Colonic mucosa (tissue), 4 donors: ENCODE measurements at regions of chr22 and their contacts with region 1.

Region 1: GRCh38 chr22:45163451-45164269 is at the start of gene NUP50:
- DNase-seq: peak; percentile 95
- H3K4me3 ChIP-seq: peak within 1 kb of the TSS; percentile 90
- H3K27ac ChIP-seq: peak within 1 kb of the TSS; percentile 89
- H3K4me1 ChIP-seq: peaks cover 28% of the 10 kb centered on the region
- H3K27me3 ChIP-seq: no peaks in the 10 kb centered on the region
- CTCF ChIP-seq: no peak
- total RNA-seq, gene NUP50: 71.9 to 111 TPM

Region 2: DNA sequence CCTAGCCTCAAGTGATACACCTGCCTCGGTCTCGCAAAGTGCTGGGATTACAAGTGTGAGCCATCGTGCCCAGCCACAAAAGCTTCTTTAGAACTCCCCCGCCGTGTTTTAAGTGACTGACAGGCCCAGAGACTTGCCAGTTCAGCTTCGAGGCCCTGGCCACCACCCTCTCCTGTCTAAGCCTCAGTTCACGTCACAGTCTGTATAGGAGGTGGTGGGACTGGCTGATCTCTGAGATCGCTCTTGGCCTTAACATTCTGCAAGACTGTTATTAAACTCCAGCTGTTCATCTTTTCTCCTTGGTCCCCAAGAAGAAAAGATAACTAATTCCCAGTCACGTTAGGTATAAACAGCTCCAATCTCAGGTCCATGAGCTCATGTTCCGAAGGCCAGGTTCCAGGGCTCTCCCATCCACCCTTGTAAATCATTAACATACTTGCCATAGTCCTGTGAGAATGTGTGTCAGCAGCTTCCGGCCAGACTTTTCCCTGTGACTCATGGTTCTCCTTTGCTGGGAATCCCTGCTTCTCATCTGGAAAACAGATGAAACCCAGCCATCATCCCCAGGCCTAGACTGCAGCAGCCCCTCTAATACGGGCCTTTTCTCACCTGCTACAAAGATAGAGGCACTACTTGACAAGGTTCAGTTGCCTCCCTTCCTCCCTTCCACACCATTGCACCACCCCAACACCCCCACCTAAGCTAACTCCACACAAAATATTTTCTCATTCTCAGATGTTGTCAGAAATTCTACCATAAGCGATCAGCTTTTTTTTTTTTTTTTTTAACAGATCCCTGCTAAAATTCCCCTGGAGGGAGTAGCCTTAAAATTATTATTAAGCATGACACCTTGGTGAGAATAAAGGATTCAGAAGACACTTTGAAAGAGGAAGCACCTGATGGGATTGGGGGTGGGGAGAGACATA is 82.7 kb after region 1 on chr22:
- intact Hi-C with region 1: loop called (anchors 5 kb)
- DNase-seq: peak; percentile 87
- H3K4me3 ChIP-seq: no peak overlapping the region
- H3K27ac ChIP-seq: peak overlapping the region; percentile 94
- H3K4me1 ChIP-seq: peaks cover 11% of the 10 kb centered on the region
- H3K27me3 ChIP-seq: no peaks in the 10 kb centered on the region
- CTCF ChIP-seq: no peak